Mammary epithelial cell (primary cell): ENCODE measurements at regions of chr2 and their contacts with region 1.

Region 1: DNA sequence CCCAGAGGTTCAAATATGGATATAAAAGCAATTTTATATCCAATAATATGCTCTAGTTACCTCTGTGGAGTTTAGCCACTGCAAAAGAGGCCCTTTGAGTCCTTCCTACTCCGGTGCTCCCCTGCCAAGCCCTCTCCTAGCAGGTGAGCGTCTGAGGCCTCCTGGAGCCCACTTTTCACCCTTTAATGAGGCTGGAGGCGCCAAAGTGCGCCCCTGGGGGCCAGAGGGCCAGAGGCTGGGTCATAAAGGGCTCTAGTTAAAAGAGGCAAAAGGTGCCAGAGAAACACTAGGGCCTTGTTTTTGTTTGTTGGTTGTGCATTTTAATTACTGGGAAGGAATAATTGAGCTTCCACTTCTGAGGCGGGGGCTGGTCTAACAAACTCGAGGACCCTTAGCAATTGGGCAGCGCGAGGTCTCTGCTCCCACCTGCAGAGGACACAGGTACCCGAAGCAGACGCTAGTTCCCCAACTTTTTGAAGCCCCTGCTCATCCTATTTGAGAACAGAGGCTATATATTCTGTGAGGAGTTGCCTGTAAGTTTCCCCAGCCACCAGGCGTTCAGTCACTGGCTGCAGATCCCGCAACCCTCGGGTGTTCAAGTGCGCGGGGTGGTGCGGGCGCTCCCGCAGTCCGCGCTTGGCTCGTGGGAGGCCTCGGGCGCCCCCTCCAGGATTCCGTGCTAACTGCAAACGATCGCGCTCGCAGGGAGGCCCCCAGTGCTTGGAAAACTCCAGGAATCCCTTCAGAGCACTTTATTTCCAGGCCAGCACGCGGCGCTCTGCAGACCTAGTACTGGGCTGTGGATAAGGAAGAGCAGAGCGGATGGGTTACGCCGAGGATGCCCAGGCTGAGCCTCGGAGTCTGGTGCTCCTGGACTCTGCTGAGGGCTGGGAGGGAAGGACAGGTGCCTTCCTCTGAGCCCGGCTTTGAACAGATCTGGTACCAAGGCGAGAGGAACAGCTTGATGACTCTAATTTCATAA is 14.1 kb downstream of the MSGN1 start:
- DNase-seq: peak; percentile 69
- H3K4me3 ChIP-seq: peak overlapping the region; percentile 21 to 28 (median 28)
- H3K27ac ChIP-seq: no peak overlapping the region
- H3K4me1 ChIP-seq: no peaks in the 10 kb centered on the region
- H3K27me3 ChIP-seq: no peaks in the 10 kb centered on the region
- CTCF ChIP-seq: peak; percentile 85 to 98

Region 2: GRCh38 chr2:17573085-17573803 is 257.1 kb before region 1 on chr2:
- CTCF ChIA-PET with region 1: no interaction called
- dilution Hi-C with region 1: no loop called
- in situ Hi-C with region 1: no loop called
- intact Hi-C with region 1: no loop called
- DNase-seq: peak; percentile 68
- H3K4me3 ChIP-seq: no peak overlapping the region
- H3K27ac ChIP-seq: peak overlapping the region; percentile 27
- H3K4me1 ChIP-seq: peaks cover 14% of the 10 kb centered on the region
- H3K27me3 ChIP-seq: no peaks in the 10 kb centered on the region
- CTCF ChIP-seq: peak in 1 of 2 donors; percentile 34

Region 3: GRCh38 chr2:17719562-17720371 is 110.6 kb before region 1 on chr2:
- CTCF ChIA-PET with region 1: no interaction called
- dilution Hi-C with region 1: no loop called
- in situ Hi-C with region 1: no loop called
- intact Hi-C with region 1: loop called (anchors 1 kb)
- DNase-seq: peak; percentile 1
- H3K4me3 ChIP-seq: no peak overlapping the region
- H3K27ac ChIP-seq: no peak overlapping the region
- H3K4me1 ChIP-seq: no peaks in the 10 kb centered on the region
- H3K27me3 ChIP-seq: no peaks in the 10 kb centered on the region
- CTCF ChIP-seq: peak; percentile 71 to 74

Region 4: DNA sequence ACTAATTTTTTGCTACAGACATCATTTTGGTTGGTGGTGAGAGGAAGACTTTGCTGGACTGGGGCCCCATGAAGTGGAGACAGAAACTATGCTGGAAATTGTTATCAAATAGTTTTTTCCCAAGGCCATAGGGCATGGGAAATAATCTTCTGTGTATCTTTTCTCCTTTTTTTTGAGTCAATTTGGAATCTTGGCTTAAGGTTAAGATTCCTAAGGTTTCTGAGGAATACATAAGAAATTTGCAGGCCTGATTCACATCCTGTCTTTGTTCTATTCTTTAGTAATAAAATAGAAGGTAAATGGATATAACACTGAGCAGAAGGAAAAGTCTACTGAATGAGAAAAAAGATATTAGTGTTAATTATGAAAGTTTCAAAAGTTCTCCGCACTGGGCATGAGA is 93.4 kb before region 1 on chr2:
- CTCF ChIA-PET with region 1: no interaction called
- dilution Hi-C with region 1: no loop called
- in situ Hi-C with region 1: no loop called
- intact Hi-C with region 1: no loop called
- DNase-seq: no peak
- H3K4me3 ChIP-seq: no peak overlapping the region
- H3K27ac ChIP-seq: no peak overlapping the region
- H3K4me1 ChIP-seq: no peaks in the 10 kb centered on the region
- H3K27me3 ChIP-seq: no peaks in the 10 kb centered on the region
- CTCF ChIP-seq: no peak

Region 5: DNA sequence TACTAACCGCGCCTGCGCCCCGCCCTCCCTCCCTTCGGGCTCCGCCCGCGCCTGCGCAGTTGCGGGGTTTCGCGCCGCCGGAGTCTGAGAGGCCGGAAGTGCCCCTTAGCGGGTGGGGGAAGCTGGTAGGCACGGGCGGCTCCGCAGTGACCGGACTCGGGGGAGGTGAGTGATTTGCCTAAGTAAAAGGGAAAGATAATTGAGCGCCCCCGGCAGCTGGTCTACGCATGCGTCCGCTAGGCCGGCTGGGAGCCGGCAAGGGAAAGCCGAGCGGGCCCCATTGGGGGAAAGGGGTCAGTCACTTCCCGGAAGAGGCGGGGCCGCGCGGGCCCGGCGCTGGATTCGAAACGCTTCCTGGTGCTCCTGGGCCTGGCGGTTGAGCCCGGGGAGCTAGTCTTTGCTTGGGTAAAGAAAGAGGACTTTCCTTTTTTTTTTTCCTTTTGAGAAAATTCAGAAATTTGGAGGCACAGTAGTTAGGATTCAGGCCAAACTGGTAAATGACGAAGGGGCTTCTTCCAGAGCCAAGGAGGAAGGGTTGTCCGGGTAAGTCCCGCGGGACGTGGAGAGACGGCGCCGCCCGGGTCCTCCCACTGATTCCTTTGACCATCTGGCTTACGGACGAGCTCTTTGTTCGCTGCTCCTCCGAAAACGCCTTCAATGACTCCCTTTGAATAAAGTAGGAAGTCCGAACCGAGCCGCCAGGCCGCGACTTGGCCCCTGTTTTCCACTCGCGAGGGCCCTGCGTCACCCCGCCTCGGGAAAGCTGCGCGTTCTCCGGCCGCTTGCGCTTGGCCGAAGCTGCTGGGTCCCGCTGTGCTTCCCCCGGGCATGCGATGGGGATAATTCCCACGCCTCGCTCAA is 76.3 kb before region 1 on chr2 and contains the starts of genes GEN1 and SMC6:
- CTCF ChIA-PET with region 1: interaction called, 3 read pairs
- dilution Hi-C with region 1: no loop called
- in situ Hi-C with region 1: no loop called
- intact Hi-C with region 1: loop called (anchors 1 kb)
- DNase-seq: peak; percentile 89
- H3K4me3 ChIP-seq: peak within 1 kb of the TSS; percentile 95 to 98 (median 97)
- H3K27ac ChIP-seq: peak within 1 kb of the TSS; percentile 94
- H3K4me1 ChIP-seq: peaks cover 27% of the 10 kb centered on the region
- H3K27me3 ChIP-seq: no peaks in the 10 kb centered on the region
- CTCF ChIP-seq: no peak
- total RNA-seq, gene GEN1: 10.0 to 27.3 TPM
- total RNA-seq, gene SMC6: 23.0 to 32.8 TPM

Region 6: GRCh38 chr2:17815468-17816184 is 14.7 kb before region 1 on chr2:
- CTCF ChIA-PET with region 1: no interaction called
- dilution Hi-C with region 1: no loop called
- in situ Hi-C with region 1: no loop called
- intact Hi-C with region 1: loop called (anchors 1 kb)
- DNase-seq: peak; percentile 80
- H3K4me3 ChIP-seq: no peak overlapping the region
- H3K27ac ChIP-seq: peak overlapping the region; percentile 97
- H3K4me1 ChIP-seq: peaks cover 44% of the 10 kb centered on the region
- H3K27me3 ChIP-seq: no peaks in the 10 kb centered on the region
- CTCF ChIP-seq: no peak

Region 7: GRCh38 chr2:17857021-17857420 is 26.7 kb after region 1 on chr2:
- CTCF ChIA-PET with region 1: no interaction called
- dilution Hi-C with region 1: no loop called
- in situ Hi-C with region 1: no loop called
- intact Hi-C with region 1: no loop called
- DNase-seq: peak; percentile 17
- H3K4me3 ChIP-seq: no peak overlapping the region
- H3K27ac ChIP-seq: no peak overlapping the region
- H3K4me1 ChIP-seq: no peaks in the 10 kb centered on the region
- H3K27me3 ChIP-seq: no peaks in the 10 kb centered on the region
- CTCF ChIP-seq: no peak

Region 8: GRCh38 chr2:18154818-18155217 is 324.5 kb after region 1 on chr2:
- CTCF ChIA-PET with region 1: no interaction called
- dilution Hi-C with region 1: no loop called
- in situ Hi-C with region 1: no loop called
- intact Hi-C with region 1: no loop called
- DNase-seq: no peak
- H3K4me3 ChIP-seq: no peak overlapping the region
- H3K27ac ChIP-seq: no peak overlapping the region
- H3K4me1 ChIP-seq: no peaks in the 10 kb centered on the region
- H3K27me3 ChIP-seq: no peaks in the 10 kb centered on the region
- CTCF ChIP-seq: no peak